ENCODE measurements at regions of chr14 and their contacts with region 1.

Region 1: GRCh38 chr14:54347997-54348611 is 48.7 kb upstream of the CDKN3 start:
- DNase-seq: peak; percentile 63
- H3K4me3 ChIP-seq: no peak overlapping the region
- H3K27ac ChIP-seq: no peak overlapping the region
- H3K4me1 ChIP-seq: peaks cover 12% of the 10 kb centered on the region
- H3K27me3 ChIP-seq: no peaks in the 10 kb centered on the region
- CTCF ChIP-seq: peak; percentile 52 to 56
- POLR2A ChIP-seq: no peak

Region 2: GRCh38 chr14:53055003-53055402 is 1293.1 kb before region 1 on chr14:
- CTCF ChIA-PET with region 1: interaction called, 11 read pairs
- POLR2A ChIA-PET with region 1: no interaction called
- dilution Hi-C with region 1: no loop called
- intact Hi-C with region 1: loop called (anchors 2 kb)
- DNase-seq: peak; percentile 70
- H3K4me3 ChIP-seq: no peak overlapping the region
- H3K27ac ChIP-seq: no peak overlapping the region
- H3K4me1 ChIP-seq: peaks cover 3% of the 10 kb centered on the region
- H3K27me3 ChIP-seq: no peaks in the 10 kb centered on the region
- CTCF ChIP-seq: peak; percentile 46 to 50
- POLR2A ChIP-seq: no peak

Region 3: DNA sequence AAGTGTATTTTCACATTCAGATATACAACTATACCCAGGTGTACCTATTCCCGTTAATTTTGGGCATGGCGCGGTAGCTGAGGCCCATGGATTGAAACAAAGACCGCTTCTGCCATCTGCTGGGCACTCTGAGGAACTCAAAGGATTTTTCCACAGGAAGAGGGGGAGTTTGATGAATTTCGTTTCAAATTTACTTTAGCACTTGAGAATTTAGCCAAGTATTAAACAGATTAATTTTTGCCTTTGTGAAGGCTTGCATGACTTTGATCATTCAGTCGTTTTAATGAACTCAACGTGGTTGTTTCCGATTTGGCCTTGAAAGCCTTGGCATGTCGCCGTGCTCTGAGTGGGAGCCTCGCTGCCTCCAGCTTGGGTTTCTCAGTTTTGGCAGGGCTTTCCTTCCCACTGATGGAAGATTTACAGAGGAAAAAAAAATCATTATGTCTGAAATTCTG is 1041.8 kb before region 1 on chr14:
- CTCF ChIA-PET with region 1: interaction called, 59 read pairs
- POLR2A ChIA-PET with region 1: no interaction called
- dilution Hi-C with region 1: no loop called
- intact Hi-C with region 1: no loop called
- DNase-seq: peak; percentile 56
- H3K4me3 ChIP-seq: peak overlapping the region; percentile 27 to 91 (median 41)
- H3K27ac ChIP-seq: no peak overlapping the region
- H3K4me1 ChIP-seq: no peaks in the 10 kb centered on the region
- H3K27me3 ChIP-seq: peaks cover 0 to 13% of the 10 kb centered on the region in 2 experiments
- CTCF ChIP-seq: peak; percentile 58 to 69
- POLR2A ChIP-seq: no peak

Region 4: DNA sequence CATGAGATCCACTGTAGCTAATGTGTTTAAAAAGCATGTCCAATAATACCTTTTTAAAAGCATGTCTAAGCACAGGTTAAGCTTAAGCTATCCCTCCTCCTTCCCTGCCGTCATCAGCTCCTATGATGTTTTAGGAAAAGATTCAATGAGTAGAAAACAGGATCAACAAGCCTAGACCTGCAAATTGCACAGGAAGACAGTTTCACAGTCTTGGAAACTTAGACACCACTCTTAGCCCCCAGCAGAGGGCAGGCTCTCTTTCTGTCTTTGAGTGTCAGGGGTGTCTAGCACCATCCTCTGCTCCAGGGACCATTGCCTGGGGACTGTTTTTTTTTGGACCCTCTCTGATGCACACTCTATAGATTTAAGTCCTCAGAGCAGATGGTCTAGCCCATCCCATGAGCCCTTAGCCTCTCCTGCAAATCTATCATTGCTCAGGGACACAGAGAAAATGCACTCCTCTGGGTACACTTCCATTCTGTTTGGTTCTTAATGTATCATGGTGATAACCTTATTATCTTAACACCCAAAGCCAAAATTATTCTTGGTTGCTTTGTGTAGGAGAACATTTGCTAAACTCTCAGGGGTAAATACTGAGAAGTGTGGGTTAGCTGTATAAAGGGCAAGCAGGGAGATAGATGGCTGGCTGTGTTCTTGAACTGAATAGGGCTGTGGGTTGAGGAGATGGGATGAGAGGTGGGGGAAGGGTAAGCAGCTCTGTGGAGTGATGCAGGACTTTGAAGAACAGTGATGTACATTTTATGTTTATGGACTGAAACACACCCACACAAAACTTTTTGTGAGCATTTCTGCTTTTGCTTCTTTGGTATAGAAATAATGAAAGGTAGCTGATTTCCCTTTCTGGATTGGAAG is 935.1 kb before region 1 on chr14:
- CTCF ChIA-PET with region 1: interaction called, 49 read pairs
- POLR2A ChIA-PET with region 1: no interaction called
- dilution Hi-C with region 1: no loop called
- intact Hi-C with region 1: loop called (anchors 1 kb)
- DNase-seq: peak; percentile 26
- H3K4me3 ChIP-seq: no peak overlapping the region
- H3K27ac ChIP-seq: no peak overlapping the region
- H3K4me1 ChIP-seq: no peaks in the 10 kb centered on the region
- H3K27me3 ChIP-seq: peaks cover 0 to 3% of the 10 kb centered on the region in 2 experiments
- CTCF ChIP-seq: peak; percentile 44 to 60
- POLR2A ChIP-seq: no peak

Region 5: DNA sequence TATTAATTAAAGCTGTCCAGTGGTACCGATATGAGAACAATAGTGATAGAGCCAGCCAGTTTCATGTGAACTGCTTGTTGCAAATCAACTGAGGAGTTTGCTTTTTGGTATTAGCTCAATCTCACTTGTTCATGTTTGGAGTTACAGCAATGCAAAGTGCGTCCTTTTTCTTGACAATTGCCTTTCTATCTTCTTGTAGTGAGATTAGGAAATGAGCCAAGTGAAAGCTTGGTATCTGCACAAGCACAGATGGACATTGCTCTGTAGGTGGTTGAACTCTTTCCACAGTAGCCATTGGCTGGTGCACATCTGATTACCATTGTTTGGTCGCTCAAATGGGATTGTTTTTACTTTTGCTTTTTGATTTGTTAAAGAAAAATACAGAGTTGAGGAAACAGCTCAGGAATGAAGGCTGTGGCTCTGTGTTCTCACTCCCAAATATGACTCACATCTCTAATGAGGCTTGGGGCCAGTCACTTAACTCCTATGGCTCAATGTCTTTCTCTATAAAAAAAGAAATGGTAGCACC is 632.8 kb before region 1 on chr14:
- CTCF ChIA-PET with region 1: interaction called, 5 read pairs
- POLR2A ChIA-PET with region 1: no interaction called
- dilution Hi-C with region 1: no loop called
- intact Hi-C with region 1: loop called (anchors 5 kb)
- DNase-seq: peak; percentile 94
- H3K4me3 ChIP-seq: peak overlapping the region in 1 of 3 experiments; percentile 56
- H3K27ac ChIP-seq: peak overlapping the region; percentile 56
- H3K4me1 ChIP-seq: peaks cover 29% of the 10 kb centered on the region
- H3K27me3 ChIP-seq: no peaks in the 10 kb centered on the region
- CTCF ChIP-seq: no peak
- POLR2A ChIP-seq: peak; percentile 31

Region 6: GRCh38 chr14:54329082-54329695 is 18.9 kb before region 1 on chr14:
- CTCF ChIA-PET with region 1: interaction called, 35 read pairs
- POLR2A ChIA-PET with region 1: no interaction called
- dilution Hi-C with region 1: no loop called
- intact Hi-C with region 1: no loop called
- DNase-seq: peak; percentile 81
- H3K4me3 ChIP-seq: no peak overlapping the region
- H3K27ac ChIP-seq: peak overlapping the region; percentile 24
- H3K4me1 ChIP-seq: peaks cover 55% of the 10 kb centered on the region
- H3K27me3 ChIP-seq: no peaks in the 10 kb centered on the region
- CTCF ChIP-seq: peak; percentile 72 to 74
- POLR2A ChIP-seq: no peak

Region 7: DNA sequence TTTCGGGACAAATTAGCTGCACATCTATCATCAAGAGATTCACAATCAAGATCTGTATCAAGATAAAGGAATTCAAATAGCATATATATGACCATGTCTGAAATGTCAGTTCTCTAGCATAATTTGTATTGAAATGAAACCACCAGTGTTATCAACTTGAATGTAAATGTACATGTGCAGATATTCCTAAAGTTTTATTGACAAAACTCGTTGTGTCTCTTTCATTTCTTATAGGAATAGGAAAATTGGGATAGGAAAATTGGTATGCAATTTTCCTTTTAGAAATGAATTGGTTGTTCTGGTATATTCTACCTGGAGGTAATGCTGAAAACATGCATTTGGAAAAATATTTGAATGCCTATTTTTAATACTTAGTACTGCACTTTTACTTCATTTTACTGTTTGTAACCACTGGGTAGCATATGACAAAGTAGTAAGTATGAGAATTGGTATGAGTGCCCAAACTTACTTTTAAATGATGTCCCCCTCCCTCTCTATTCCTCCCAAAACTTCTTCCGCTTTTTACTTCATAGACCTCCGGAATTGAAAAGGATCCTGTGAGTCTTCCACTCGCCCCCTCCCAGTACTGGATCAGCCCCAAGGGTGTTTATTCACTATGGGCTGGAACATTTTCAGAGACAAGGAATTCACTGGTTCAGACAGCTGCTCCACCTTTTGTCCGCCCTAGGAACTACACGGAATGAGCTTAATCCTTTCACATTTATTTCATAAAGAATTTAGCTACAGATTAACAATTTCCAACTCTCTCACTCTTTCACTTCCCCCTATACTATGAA is 72.1 kb after region 1 on chr14:
- CTCF ChIA-PET with region 1: interaction called, 28 read pairs
- POLR2A ChIA-PET with region 1: no interaction called
- dilution Hi-C with region 1: no loop called
- intact Hi-C with region 1: no loop called
- DNase-seq: peak; percentile 75
- H3K4me3 ChIP-seq: no peak overlapping the region
- H3K27ac ChIP-seq: no peak overlapping the region
- H3K4me1 ChIP-seq: no peaks in the 10 kb centered on the region
- H3K27me3 ChIP-seq: no peaks in the 10 kb centered on the region
- CTCF ChIP-seq: peak; percentile 49 to 57
- POLR2A ChIP-seq: no peak

Measured in endothelial cell of umbilical vein (primary cell).